ENCODE measurements at regions of chr6 and their contacts with region 1.

Region 1: GRCh38 chr6:43070028-43070632 is 6.0 kb upstream of the PTK7 start:
- DNase-seq: peak in 1 of 4 donors; percentile 79
- ATAC-seq: peak; percentile 76
- H3K4me3 ChIP-seq: no peak overlapping the region
- H3K27ac ChIP-seq: no peak overlapping the region
- H3K4me1 ChIP-seq: peaks cover 0 to 4% of the 10 kb centered on the region in 2 donors
- H3K27me3 ChIP-seq: no peaks in the 10 kb centered on the region
- CTCF ChIP-seq: peak; percentile 17 to 36

Region 2: DNA sequence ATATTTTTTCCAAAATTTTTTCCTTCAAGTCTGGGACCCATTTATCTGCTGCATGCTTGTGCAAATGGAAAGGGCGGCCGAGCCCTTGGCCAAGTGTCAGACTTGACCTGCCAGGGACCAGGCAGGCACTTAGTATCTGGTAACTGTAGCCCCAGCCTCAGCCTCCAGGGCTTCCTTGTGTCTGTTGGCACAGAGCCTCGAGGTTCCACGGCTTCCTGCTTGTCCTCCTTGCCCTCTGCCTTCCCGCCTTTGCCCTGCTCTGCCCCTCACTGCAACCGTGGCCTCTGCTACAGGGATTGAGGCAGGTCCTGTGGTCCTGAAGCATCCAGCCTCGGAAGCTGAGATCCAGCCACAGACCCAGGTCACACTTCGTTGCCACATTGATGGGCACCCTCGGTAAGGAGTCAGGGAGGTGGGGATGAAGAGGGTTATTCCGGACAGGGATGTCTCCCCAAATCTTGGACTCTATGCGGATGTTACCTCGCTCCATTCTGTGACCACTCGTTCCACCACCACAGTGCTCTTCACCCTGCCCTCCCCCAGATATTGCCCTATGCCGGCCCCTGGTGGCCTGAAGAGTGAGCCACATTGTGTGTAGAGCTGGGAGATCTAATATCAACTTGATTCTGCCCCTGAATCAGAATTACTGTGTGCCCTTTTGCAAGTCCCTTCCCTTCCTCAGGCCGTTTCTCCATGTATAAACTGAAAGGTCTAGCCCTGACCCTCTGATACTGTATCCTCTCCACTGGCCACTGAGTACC is 59.5 kb after region 1 on chr6:
- intact Hi-C with region 1: loop called in 1 of 2 experiments (anchors 10 kb)
- DNase-seq: no peak
- ATAC-seq: peak; percentile 76
- H3K4me3 ChIP-seq: no peak overlapping the region
- H3K27ac ChIP-seq: no peak overlapping the region
- H3K4me1 ChIP-seq: peaks cover 9 to 16% of the 10 kb centered on the region in 2 donors
- H3K27me3 ChIP-seq: no peaks in the 10 kb centered on the region
- CTCF ChIP-seq: peak; percentile 28 to 29

Measured in left lung (tissue), 14 donors.